H1 (cell line): ENCODE measurements at regions of chr19 and their contacts with region 1.

Region 1: DNA sequence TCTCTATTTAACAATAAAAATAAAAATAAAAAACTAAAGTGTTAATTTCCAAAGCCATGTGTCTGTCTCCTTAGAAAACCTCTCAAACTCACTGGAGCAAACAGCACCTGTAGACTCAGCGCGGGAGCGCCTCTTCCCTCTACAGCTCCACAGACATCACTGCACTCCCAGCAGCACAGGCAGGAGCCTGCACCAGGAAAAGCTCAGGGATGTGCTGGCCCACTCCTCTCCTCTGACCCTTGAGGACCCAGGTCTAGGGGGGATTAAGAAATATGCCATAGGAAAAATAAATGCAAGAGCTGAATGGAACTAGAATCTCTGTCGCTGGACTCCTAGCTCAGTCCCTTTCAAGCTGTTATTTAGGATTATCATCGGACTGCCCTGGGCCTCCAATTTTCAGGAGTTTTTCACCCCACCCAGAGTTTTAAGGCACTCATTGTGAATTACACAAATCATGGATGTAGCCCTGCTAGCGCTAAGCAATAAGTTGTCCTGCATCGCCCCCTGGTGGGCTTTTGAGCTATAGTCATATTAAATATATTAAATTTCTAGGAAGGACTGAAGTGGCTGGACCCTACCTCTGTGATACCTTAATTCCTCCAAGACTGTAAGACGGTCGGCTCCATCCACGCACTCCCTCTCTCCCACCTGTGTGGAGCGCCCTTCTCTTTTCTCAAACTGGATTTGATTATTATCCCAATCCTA is 333.9 kb downstream of the UQCRFS1 start:
- DNase-seq: peak; percentile 49 to 80
- H3K4me3 ChIP-seq: no peak overlapping the region
- H3K27ac ChIP-seq: no peak overlapping the region
- H3K4me1 ChIP-seq: peaks cover 7 to 22% (median 15%) of the 10 kb centered on the region in 4 experiments
- H3K27me3 ChIP-seq: no peaks in the 10 kb centered on the region; a peak in 1 of 7 replicates
- CTCF ChIP-seq: peak; percentile 1 to 79 (median 37)
- EP300 ChIP-seq: no peak
- POLR2A ChIP-seq: no peak
- RAD21 ChIP-seq: peak; percentile 86 to 90

Region 2: DNA sequence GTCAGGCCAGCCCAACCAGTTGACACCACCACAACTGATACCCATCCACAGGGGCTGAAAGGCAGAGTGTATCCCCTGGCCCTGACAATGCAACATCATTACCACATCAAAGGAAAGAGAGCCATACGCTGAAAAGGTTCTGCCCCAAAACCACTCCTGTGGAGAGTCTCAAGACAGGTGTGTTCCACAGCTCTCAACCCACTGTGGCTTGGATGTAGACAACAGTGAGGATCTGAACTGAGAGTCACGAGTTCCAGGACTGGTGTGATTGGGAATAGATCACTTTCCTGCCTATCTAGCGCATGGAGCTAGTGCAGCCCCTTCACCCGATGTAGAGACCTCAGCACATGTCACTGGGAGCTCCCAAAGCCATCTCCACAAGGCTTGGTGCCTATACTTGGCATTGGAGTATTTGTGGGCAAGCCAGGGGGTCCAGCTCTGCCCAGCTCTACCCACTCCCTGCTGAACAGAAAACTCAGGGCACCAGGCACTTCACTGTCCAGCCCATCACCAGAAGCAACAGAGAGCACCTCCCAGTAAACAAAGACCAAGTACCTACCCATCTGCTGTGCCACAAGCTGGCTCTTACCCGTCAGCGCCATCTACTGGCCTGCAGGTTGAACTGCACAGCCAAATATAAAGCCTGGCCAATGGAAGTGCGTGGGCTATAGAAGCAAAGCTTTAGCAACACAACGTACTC is 245.5 kb before region 1 on chr19:
- CTCF ChIA-PET with region 1: interaction called, 20 read pairs
- POLR2A ChIA-PET with region 1: no interaction called
- DNase-seq: peak; percentile 39 to 72
- H3K4me3 ChIP-seq: no peak overlapping the region
- H3K27ac ChIP-seq: no peak overlapping the region
- H3K4me1 ChIP-seq: peaks cover 0 to 3% (median 2%) of the 10 kb centered on the region in 4 experiments; a peak in 6 of 7 replicates
- H3K27me3 ChIP-seq: no peaks in the 10 kb centered on the region
- CTCF ChIP-seq: peak; percentile 91 to 99 (median 94)
- EP300 ChIP-seq: no peak
- POLR2A ChIP-seq: no peak
- RAD21 ChIP-seq: peak; percentile 97 to 98

Region 3: DNA sequence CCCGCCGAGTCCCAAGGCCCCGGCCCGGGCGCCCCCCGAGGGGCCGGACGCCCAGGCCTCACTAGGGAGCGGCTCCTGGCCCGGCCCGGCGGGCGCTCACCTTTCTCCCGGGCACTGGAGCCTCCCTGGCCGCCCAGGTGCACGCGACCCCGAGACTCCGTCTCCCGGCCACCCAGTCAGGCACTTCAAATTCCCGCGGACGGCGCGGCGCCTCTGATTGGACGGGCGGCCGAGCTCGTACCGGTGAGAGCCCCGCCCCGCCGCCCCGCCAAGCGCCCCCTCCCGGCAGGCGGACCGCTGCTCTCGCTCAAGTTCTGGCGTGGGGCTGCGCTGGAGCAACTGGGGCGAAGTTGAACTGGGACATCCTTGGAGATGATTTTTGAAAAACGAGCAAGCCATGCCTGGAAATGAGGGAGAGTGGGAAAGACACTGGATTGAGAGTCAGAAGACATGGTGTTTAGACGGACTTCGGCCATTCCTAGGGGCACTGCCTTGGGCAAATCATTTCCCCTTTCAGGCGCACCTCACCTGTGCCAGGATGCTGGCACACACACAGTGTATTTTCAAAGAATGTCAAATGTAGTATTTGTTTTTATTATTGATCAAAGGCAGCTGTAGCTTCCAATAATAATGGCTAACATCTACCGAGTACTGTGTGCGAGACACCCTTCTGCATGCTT is 151.4 kb before region 1 on chr19:
- CTCF ChIA-PET with region 1: interaction called, 11 read pairs
- POLR2A ChIA-PET with region 1: no interaction called
- DNase-seq: peak; percentile 43 to 88
- H3K4me3 ChIP-seq: peak overlapping the region; percentile 77 to 91 (median 86)
- H3K27ac ChIP-seq: no peak overlapping the region
- H3K4me1 ChIP-seq: no peaks in the 10 kb centered on the region; a peak in 1 of 7 replicates
- H3K27me3 ChIP-seq: peaks cover 0 to 4% (median 3%) of the 10 kb centered on the region in 4 experiments; a peak in 3 of 7 replicates
- CTCF ChIP-seq: peak; percentile 43 to 64 (median 60)
- EP300 ChIP-seq: no peak
- POLR2A ChIP-seq: peak in 1 of 2 experiments; percentile 53; a peak in 1 of 3 replicates
- RAD21 ChIP-seq: peak in 1 of 2 experiments; percentile 25; a peak in 2 of 4 replicates

Region 4: GRCh38 chr19:28737021-28737895 is 141.8 kb before region 1 on chr19:
- CTCF ChIA-PET with region 1: interaction called, 79 read pairs
- POLR2A ChIA-PET with region 1: no interaction called
- DNase-seq: no peak
- H3K4me3 ChIP-seq: no peak overlapping the region
- H3K27ac ChIP-seq: no peak overlapping the region
- H3K4me1 ChIP-seq: peaks cover 0 to 2% (median 0%) of the 10 kb centered on the region in 4 experiments; a peak in 1 of 7 replicates
- H3K27me3 ChIP-seq: no peaks in the 10 kb centered on the region
- CTCF ChIP-seq: peak in 2 of 3 experiments; percentile 43 to 47; a peak in 2 of 4 replicates
- EP300 ChIP-seq: no peak
- POLR2A ChIP-seq: no peak
- RAD21 ChIP-seq: peak; percentile 53 to 57

Region 5: GRCh38 chr19:28855216-28855615 is 23.8 kb before region 1 on chr19:
- CTCF ChIA-PET with region 1: interaction called, 13 read pairs
- POLR2A ChIA-PET with region 1: no interaction called
- DNase-seq: no peak
- H3K4me3 ChIP-seq: no peak overlapping the region
- H3K27ac ChIP-seq: no peak overlapping the region
- H3K4me1 ChIP-seq: no peaks in the 10 kb centered on the region
- H3K27me3 ChIP-seq: peaks cover 0 to 1% (median 0%) of the 10 kb centered on the region in 4 experiments; a peak in 2 of 7 replicates
- CTCF ChIP-seq: no peak
- EP300 ChIP-seq: no peak
- POLR2A ChIP-seq: no peak
- RAD21 ChIP-seq: no peak

Region 6: GRCh38 chr19:28864024-28864503 is 14.9 kb before region 1 on chr19:
- CTCF ChIA-PET with region 1: interaction called, 12 read pairs
- POLR2A ChIA-PET with region 1: no interaction called
- DNase-seq: no peak
- H3K4me3 ChIP-seq: no peak overlapping the region
- H3K27ac ChIP-seq: no peak overlapping the region
- H3K4me1 ChIP-seq: no peaks in the 10 kb centered on the region; a peak in 1 of 7 replicates
- H3K27me3 ChIP-seq: no peaks in the 10 kb centered on the region; a peak in 1 of 7 replicates
- CTCF ChIP-seq: no peak
- EP300 ChIP-seq: no peak
- POLR2A ChIP-seq: no peak
- RAD21 ChIP-seq: no peak

Region 7: GRCh38 chr19:28889941-28890670 is 11.1 kb after region 1 on chr19:
- CTCF ChIA-PET with region 1: interaction called, 10 read pairs
- POLR2A ChIA-PET with region 1: no interaction called
- DNase-seq: no peak
- H3K4me3 ChIP-seq: no peak overlapping the region
- H3K27ac ChIP-seq: no peak overlapping the region
- H3K4me1 ChIP-seq: peaks cover 0 to 4% (median under 1%) of the 10 kb centered on the region in 4 experiments; a peak in 1 of 7 replicates
- H3K27me3 ChIP-seq: no peaks in the 10 kb centered on the region
- CTCF ChIP-seq: no peak
- EP300 ChIP-seq: no peak
- POLR2A ChIP-seq: no peak
- RAD21 ChIP-seq: no peak